Kidney (tissue), 22 donors: ENCODE measurements at regions of chr5 and their contacts with region 1.

Region 1: GRCh38 chr5:37837414-37838032 is 2.3 kb downstream of the GDNF start:
- DNase-seq: peak; percentile 88 to 92 (median 91)
- H3K4me3 ChIP-seq: peak overlapping the region; percentile 35 to 72 (median 56)
- H3K27ac ChIP-seq: no peak overlapping the region
- H3K4me1 ChIP-seq: peaks cover 0 to 23% (median 2%) of the 10 kb centered on the region in 3 donors
- H3K27me3 ChIP-seq: peaks cover 7% of the 10 kb centered on the region
- CTCF ChIP-seq: peak; percentile 73

Region 2: DNA sequence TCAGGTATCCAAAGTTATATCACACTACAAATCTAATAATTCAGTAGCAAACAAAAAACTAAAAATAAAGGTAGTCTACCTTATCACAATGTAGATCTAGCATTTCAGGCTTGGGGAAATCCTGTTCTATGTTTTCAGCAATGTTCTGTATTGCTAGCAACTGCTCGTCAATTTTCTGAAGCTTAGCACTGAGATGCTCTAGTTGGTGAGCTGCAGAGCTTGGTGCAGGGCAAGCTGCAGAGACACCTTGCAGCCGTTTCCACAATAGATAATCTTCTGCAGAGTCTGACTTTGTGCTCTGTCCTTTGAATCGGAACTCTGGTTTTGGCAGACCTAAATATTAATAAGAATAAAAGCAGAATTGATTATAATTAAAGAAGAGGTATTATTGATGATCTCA is 683.9 kb before region 1 on chr5:
- intact Hi-C with region 1: no loop called
- DNase-seq: no peak
- H3K4me3 ChIP-seq: no peak overlapping the region
- H3K27ac ChIP-seq: no peak overlapping the region
- H3K4me1 ChIP-seq: no peaks in the 10 kb centered on the region
- H3K27me3 ChIP-seq: no peaks in the 10 kb centered on the region
- CTCF ChIP-seq: no peak

Region 3: GRCh38 chr5:37685213-37685612 is 152.3 kb before region 1 on chr5:
- intact Hi-C with region 1: no loop called
- DNase-seq: no peak
- H3K4me3 ChIP-seq: no peak overlapping the region
- H3K27ac ChIP-seq: no peak overlapping the region
- H3K4me1 ChIP-seq: no peaks in the 10 kb centered on the region
- H3K27me3 ChIP-seq: no peaks in the 10 kb centered on the region
- CTCF ChIP-seq: no peak

Region 4: DNA sequence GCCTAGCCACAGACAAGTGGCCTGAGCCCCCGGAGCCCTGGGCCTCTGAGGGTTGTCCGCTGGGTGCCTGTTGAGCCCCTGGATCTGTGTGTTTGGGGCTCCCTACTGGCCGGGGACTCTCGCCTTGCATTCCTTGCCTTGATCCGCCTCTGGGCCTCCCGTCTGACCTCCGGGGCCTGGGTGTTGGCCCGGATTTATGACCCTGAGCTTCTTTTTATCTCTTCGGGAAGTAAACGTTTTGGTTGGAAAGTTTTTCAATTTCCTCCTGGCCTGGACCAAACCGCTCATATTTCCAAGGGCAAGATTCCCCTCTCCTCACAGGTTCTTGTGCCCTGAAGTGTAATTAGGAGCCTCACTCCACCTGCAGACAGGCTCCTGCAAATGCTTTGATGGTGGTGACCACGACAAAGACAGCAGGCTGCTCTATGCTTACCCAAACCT is 351.6 kb after region 1 on chr5:
- intact Hi-C with region 1: loop called (anchors 5 kb)
- DNase-seq: peak in 4 of 5 donors; percentile 89 to 95 (median 91)
- H3K4me3 ChIP-seq: no peak overlapping the region
- H3K27ac ChIP-seq: no peak overlapping the region
- H3K4me1 ChIP-seq: peaks cover 0 to 3% (median 0%) of the 10 kb centered on the region in 3 donors
- H3K27me3 ChIP-seq: no peaks in the 10 kb centered on the region
- CTCF ChIP-seq: no peak

Region 5: DNA sequence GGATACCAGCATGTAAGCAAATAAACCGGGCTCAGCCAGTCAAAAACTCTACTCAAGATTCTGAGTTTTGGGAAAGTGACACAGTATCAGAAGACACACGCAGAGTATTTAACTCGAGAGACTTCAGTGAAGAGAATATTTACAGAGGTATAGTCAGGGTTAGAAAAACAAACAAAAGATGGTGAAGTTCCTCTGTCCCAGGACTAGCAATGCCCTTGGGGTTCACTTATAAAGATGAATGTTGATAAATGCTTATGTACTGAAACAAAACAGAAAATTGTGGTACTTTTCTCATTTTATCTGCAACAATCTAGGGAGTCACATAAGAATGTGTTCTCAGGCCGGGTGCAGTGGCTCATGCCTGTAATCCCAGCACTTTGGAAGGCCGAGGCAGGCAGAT is 358.6 kb after region 1 on chr5:
- intact Hi-C with region 1: loop called (anchors 5 kb)
- DNase-seq: no peak
- H3K4me3 ChIP-seq: no peak overlapping the region
- H3K27ac ChIP-seq: no peak overlapping the region
- H3K4me1 ChIP-seq: peaks cover 0 to 3% (median 0%) of the 10 kb centered on the region in 3 donors
- H3K27me3 ChIP-seq: no peaks in the 10 kb centered on the region
- CTCF ChIP-seq: no peak